Endothelial cell of umbilical vein (primary cell): ENCODE measurements at regions of chr4 and their contacts with region 1.

Region 1: GRCh38 chr4:83284193-83285054 is at the start of gene COQ2:
- DNase-seq: peak; percentile 96
- H3K4me3 ChIP-seq: peak within 1 kb of the TSS; percentile 35 to 82 (median 52)
- H3K27ac ChIP-seq: peak within 1 kb of the TSS; percentile 87
- H3K4me1 ChIP-seq: peaks cover 23% of the 10 kb centered on the region
- H3K27me3 ChIP-seq: no peaks in the 10 kb centered on the region
- CTCF ChIP-seq: peak in 1 of 2 donors; percentile 26
- POLR2A ChIP-seq: peak; percentile 92
- total RNA-seq, gene COQ2: 26.4 and 28.0 TPM in 2 replicates

Region 2: GRCh38 chr4:82851885-82852750 is 432.3 kb before region 1 on chr4:
- CTCF ChIA-PET with region 1: interaction called, 14 read pairs
- POLR2A ChIA-PET with region 1: no interaction called
- dilution Hi-C with region 1: no loop called
- intact Hi-C with region 1: loop called (anchors 5 kb)
- DNase-seq: peak; percentile 61
- H3K4me3 ChIP-seq: no peak overlapping the region
- H3K27ac ChIP-seq: no peak overlapping the region
- H3K4me1 ChIP-seq: no peaks in the 10 kb centered on the region
- H3K27me3 ChIP-seq: no peaks in the 10 kb centered on the region
- CTCF ChIP-seq: peak in 1 of 2 donors; percentile 52
- POLR2A ChIP-seq: no peak

Region 3: DNA sequence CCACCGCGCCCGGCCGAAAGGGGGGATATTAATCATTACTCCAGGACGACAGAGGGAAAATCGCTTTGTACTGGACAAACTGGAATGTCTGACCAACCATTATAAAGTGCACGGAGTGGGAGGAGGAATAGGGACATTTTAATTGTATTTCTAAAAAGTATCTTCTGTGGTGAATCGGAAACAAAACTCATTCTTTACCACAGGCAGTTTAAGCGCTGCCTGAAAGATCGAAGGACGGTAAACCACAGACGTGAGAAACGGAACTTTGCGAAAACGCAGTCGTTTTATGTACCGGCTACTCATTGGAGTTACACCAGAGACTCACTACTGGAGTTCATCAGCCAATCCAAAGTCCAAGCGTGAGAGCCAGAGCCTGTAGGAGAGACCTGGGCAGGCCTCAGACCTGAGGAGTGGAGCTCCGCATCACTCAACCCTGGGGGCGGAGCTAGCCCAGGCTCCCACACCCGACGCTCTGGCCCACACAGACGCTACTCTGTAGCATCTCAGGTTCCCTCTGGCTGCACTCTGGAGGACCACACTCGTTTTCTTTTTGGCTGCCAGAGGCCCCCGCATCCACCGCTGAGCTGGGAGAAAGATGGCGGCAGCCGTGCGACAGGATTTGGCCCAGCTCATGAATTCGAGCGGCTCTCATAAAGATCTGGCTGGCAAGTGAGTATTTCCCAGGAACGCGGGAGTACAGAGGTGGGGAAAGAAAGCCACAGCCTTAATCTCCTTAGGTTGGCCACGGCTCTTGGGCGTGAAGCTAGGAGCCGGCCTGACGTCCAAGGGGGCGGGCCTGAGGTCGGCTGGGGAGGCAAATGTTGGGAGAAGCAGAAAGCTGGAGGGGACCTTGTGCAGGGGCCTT is 249.6 kb before region 1 on chr4 and contains the start of gene COPS4:
- CTCF ChIA-PET with region 1: interaction called, 17 read pairs
- POLR2A ChIA-PET with region 1: no interaction called
- dilution Hi-C with region 1: no loop called
- intact Hi-C with region 1: loop called (anchors 1 kb)
- DNase-seq: peak; percentile 100
- H3K4me3 ChIP-seq: peak within 1 kb of the TSS; percentile 78 to 94 (median 91)
- H3K27ac ChIP-seq: peak within 1 kb of the TSS; percentile 88
- H3K4me1 ChIP-seq: peaks cover 28% of the 10 kb centered on the region
- H3K27me3 ChIP-seq: peaks cover 0 to 3% of the 10 kb centered on the region in 2 experiments
- CTCF ChIP-seq: peak in 1 of 2 donors; percentile 40
- POLR2A ChIP-seq: peak; percentile 88
- total RNA-seq, gene COPS4: 47.3 and 53.0 TPM in 2 replicates

Region 4: DNA sequence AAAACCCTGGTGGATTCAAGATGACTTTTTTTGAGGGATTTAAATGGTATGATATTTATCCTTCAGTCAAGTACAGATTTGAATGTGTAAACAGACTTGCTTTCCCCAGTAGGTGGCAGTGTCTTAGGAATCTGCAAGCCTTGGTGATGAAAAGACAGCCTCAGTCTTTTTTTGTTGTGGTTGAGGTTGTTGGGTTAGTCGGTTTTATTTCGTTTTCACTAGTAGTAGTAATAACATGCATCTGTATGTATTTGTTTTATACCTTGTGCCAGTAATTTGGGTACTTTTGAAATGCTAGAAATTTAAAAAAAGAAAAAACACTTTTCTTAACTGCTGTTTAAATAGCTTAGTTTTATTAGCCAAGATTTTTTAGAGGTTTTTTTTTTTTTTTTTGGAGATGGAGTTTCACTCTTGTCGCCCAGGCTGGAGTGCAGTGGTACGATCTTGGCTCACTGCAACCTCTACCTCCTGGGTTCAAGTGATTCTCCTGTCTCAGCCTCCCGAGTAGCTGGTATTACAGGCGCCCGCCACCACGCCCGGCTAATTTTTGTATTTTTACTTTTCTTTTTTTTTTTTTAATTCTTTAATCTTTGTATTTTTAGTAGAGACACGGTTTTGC is 210.2 kb before region 1 on chr4:
- CTCF ChIA-PET with region 1: interaction called, 68 read pairs
- POLR2A ChIA-PET with region 1: interaction called, 3 read pairs
- dilution Hi-C with region 1: no loop called
- intact Hi-C with region 1: loop called (anchors 1 kb)
- DNase-seq: peak; percentile 72
- H3K4me3 ChIP-seq: no peak overlapping the region
- H3K27ac ChIP-seq: no peak overlapping the region
- H3K4me1 ChIP-seq: peaks cover 28% of the 10 kb centered on the region
- H3K27me3 ChIP-seq: no peaks in the 10 kb centered on the region
- CTCF ChIP-seq: peak; percentile 59 to 63
- POLR2A ChIP-seq: no peak

Region 5: GRCh38 chr4:83272900-83273299 is 11.5 kb before region 1 on chr4:
- CTCF ChIA-PET with region 1: interaction called, 39 read pairs
- POLR2A ChIA-PET with region 1: no interaction called
- dilution Hi-C with region 1: no loop called
- intact Hi-C with region 1: no loop called
- DNase-seq: no peak
- H3K4me3 ChIP-seq: no peak overlapping the region
- H3K27ac ChIP-seq: no peak overlapping the region
- H3K4me1 ChIP-seq: no peaks in the 10 kb centered on the region
- H3K27me3 ChIP-seq: no peaks in the 10 kb centered on the region
- CTCF ChIP-seq: no peak
- POLR2A ChIP-seq: no peak

Region 6: GRCh38 chr4:83356899-83357661 is 72.7 kb after region 1 on chr4:
- CTCF ChIA-PET with region 1: interaction called, 18 read pairs
- POLR2A ChIA-PET with region 1: interaction called, 4 read pairs
- dilution Hi-C with region 1: no loop called
- intact Hi-C with region 1: loop called (anchors 1 kb)
- DNase-seq: peak; percentile 95
- H3K4me3 ChIP-seq: no peak overlapping the region
- H3K27ac ChIP-seq: peak overlapping the region; percentile 92
- H3K4me1 ChIP-seq: peaks cover 27% of the 10 kb centered on the region
- H3K27me3 ChIP-seq: no peaks in the 10 kb centered on the region
- CTCF ChIP-seq: no peak
- POLR2A ChIP-seq: no peak

Region 7: DNA sequence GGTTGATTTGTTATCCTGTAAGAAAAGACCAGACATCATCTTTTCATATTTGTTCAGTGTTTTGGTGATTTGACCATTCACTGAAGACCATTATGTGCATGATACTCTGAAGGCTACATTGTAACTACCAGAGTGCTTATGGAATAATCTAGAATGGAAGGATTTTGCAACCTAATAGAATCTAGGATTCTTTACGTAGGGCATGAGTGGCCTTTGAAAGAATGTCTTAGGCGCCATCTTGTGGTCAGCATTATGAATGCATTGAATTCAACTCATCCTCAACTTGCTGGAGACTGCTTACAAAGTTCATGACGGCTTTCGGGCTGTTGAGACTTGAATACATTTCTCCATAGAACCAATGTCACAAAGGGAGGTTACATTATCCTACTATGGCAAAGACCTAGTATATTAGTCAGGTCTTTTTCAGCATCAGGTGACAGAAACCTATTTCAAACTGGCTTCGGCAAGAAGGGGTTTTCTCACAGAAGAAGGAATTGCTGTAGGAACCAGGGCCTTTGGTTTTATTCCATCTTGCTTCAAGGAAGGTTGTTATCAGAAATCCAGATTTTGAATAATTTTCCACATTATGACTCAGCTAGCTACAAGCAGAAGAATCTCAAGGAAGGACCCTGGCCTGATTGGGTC is 355.5 kb after region 1 on chr4:
- CTCF ChIA-PET with region 1: interaction called, 3 read pairs
- POLR2A ChIA-PET with region 1: no interaction called
- dilution Hi-C with region 1: no loop called
- intact Hi-C with region 1: loop called (anchors 2 kb)
- DNase-seq: peak; percentile 78
- H3K4me3 ChIP-seq: no peak overlapping the region
- H3K27ac ChIP-seq: no peak overlapping the region
- H3K4me1 ChIP-seq: no peaks in the 10 kb centered on the region
- H3K27me3 ChIP-seq: peaks cover 13 to 22% of the 10 kb centered on the region in 2 experiments
- CTCF ChIP-seq: peak; percentile 59 to 66
- POLR2A ChIP-seq: no peak